Cardiac septum (tissue), 1 donor: ENCODE measurements at regions of chr9 and their contacts with region 1.

Region 1: GRCh38 chr9:96619491-96620154 is at the start of gene CDC14B:
- DNase-seq: peak; percentile 91
- total RNA-seq, gene CDC14B: 25.5 TPM

Region 2: DNA sequence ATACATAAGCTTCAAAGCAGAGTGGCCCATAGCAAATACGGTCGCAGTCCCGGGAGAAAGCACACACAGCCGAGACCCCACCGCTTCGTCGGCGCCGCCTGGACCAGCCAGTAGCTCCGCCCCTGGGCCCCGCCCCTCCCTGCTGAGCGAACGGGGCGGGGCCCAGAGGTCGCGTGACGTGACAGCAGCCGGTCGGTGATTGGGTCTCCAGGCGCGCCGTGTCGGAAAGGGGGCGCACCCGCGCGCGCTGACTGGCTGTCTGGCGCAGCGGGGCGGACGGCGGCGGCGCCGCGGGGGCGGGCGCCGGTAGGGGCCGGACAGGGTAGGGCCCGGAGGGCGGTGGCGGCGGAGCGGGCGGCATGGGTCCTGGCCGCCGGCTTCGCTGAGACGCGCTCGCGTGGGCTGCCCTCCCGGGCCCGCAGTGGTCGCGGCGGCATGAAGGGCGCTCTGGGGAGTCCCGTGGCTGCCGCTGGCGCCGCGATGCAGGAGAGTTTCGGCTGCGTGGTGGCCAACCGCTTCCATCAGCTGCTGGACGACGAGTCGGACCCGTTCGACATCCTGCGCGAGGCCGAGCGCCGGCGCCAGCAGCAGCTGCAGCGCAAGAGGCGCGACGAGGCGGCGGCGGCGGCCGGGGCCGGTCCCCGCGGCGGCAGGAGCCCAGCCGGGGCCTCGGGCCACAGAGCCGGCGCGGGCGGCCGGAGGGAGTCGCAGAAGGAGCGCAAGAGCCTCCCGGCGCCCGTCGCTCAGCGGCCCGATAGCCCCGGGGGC is 169.6 kb before region 1 on chr9 and contains the start of gene HABP4:
- intact Hi-C with region 1: loop called (anchors 5 kb)
- DNase-seq: peak; percentile 98
- total RNA-seq, gene HABP4: 29.7 TPM

Region 3: DNA sequence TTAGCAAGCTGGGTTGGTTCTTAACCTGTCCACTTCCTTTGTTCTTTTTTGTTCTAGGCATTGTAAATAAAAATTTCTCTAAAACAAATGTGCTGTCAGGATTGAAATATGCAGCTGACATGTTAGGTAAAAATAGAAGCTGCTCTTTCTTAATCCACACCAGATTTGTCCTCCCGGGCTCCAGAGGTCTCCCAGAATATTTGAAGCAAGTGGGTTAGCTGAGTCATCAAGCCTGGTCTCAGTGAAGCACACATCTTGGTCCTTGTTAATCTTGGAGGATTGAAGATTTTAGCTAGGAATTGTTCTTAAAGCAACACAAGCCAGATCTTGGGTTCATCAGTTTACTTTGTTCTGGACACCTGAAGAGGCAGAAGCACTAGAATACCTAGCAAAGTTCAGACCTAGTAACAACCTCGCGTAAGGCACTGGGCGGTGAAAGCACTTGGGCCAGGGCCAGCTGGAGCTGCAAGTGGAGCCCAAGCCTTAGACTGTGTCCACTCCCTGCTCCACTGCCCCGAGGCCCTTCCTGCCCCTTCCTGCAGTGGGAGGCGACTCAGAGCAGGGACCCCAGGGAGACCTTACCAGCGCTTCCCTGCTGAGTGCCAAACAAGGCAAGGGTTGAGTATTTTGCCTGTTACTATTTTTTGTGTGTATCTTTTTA is 133.1 kb before region 1 on chr9:
- intact Hi-C with region 1: loop called (anchors 5 kb)
- DNase-seq: peak; percentile 86

Region 4: GRCh38 chr9:96654443-96655197 is 35.0 kb after region 1 on chr9:
- intact Hi-C with region 1: loop called (anchors 2 kb)
- DNase-seq: peak; percentile 92

Region 5: DNA sequence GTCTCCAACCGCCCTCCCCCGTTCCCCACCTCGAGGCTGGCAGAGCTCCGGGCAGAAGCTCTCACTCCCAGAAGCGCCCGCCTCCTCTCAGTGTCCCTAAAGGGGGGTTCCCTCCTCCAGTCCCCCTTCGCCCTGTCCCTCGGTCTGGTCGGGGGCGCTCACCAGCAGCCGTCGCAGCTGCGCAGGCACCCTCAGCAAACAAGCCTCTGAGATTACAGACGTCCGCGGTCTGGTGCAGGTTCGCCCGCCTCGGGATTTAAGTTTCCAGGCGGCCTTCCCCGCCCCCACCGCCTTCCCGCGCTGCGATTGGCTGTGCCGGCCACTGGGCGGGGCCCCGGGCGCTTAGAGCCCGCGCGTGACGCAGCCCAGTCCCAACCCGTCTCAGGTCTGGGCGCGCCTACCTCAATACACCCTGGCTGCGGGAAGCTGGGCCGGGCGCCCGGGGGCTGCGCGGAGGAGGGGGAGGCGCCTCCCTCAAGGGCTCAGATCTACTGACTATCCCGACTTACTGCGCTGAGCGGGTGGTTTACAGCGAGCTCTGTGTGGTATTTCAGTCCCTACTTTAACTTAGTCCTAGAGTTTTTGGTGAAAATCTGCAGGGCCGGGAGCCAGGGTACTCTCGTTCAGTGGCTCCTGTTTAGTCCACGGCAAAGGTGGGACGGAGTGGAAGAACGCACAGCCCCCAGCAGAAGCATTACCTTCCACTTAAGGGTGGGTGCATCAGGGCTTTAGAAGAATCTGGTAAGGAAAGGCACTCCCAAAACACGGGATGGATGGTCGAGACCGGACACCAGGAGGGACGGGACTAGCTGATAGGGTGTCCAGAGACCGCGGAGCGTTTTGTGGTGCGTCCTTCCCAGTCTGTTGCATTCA is 419.5 kb after region 1 on chr9 and contains the start of gene CTSV:
- intact Hi-C with region 1: no loop called
- DNase-seq: peak; percentile 91
- total RNA-seq, gene CTSV: not detected